Activated T-helper 1 cell treated with anti-CD3 and anti-CD28 coated beads, Interleukin-12 subunit alpha, Interleukin-12 subunit beta, Interleukin-2, Interleukin-4 antibody, amounts not matched to agents 30 ng/mL and 10 ng/mL and 1 ng/mL, durations not matched to agents 14 hours and 24 hours and 36 hours (primary cell): ENCODE measurements at regions of chr12 and their contacts with region 1.

Region 1: DNA sequence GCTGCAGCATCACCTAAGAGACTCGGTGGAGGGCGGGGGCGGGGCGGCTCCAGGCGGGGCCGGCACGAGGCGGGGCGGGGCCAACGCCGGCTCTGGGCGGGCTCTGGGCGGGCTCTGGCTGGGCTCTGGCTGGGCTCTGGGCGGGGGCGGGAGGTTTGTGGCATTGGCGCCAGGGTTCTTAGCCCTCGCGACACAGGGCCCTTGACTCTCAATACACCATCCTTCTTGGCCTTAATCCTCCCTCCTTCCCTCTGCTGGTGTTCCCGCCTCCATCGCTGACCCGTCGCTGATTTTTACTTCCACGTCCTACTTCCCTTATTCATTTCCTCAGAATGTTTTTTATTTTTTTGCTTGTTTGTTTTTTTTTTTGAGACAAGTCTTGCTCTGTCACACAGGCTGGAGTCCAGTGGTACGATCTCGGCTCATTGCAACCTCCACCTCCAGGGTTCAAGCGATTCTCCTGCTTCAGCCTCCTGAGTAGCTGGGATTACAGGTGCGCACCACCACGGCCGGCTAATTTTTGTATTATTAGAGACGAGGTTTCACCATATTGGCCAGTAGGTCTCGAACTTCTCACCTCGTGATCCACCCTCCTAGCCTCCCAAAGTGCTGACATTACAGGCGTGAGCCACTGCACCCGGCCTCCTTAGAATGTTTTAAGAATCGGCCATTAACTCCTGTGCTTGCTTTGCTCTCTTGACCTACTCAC is at the start of gene BLTP3B:
- DNase-seq: peak; percentile 80
- H3K4me3 Mint-ChIP-seq: peak within 1 kb of the TSS; percentile 94
- H3K27ac Mint-ChIP-seq: peak within 1 kb of the TSS; percentile 96
- H3K4me1 Mint-ChIP-seq: peaks cover 44% of the 10 kb centered on the region
- H3K27me3 Mint-ChIP-seq: no peaks in the 10 kb centered on the region
- total RNA-seq, gene BLTP3B: 72.6 and 74.6 TPM in 2 replicates

Region 2: GRCh38 chr12:98503592-98504367 is 1639.2 kb before region 1 on chr12:
- intact Hi-C with region 1: loop called (anchors 5 kb)
- DNase-seq: peak; percentile 90
- H3K4me3 Mint-ChIP-seq: peak overlapping the region; percentile 91
- H3K27ac Mint-ChIP-seq: peak overlapping the region; percentile 99
- H3K4me1 Mint-ChIP-seq: peaks cover 27% of the 10 kb centered on the region
- H3K27me3 Mint-ChIP-seq: peaks cover 8% of the 10 kb centered on the region

Region 3: DNA sequence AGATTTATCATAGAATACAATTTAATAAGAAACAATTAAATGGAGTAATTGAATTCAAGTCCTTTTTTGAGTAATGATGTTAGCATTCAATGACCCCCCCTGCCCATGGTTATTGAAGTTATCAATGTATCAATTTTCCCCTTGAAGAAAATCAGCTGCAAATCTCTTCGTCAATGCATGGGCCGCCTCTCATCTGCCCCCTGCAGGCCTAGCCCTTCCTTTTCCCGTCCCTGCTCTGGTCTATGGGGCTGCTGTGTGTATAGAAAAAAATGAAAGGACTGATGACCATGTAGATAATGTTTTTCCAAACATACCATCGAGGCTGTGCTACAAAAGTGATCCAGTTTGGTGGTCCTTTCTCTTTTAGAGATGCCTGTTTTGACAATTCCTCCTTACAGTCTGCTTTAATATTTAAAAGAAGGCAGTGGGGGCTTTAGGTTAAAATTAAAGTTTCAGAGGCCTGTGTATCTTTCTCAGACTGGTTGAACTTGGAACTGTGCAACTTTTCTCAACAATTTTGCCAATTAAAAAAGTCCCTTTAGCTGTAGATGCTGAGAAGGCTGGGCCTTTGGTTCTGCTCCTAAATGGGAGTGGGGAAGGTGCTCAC is 1399.6 kb before region 1 on chr12:
- intact Hi-C with region 1: loop called (anchors 5 kb)
- DNase-seq: peak; percentile 11
- H3K4me3 Mint-ChIP-seq: peak overlapping the region; percentile 69
- H3K27ac Mint-ChIP-seq: peak overlapping the region; percentile 76
- H3K4me1 Mint-ChIP-seq: peaks cover 60% of the 10 kb centered on the region
- H3K27me3 Mint-ChIP-seq: peaks cover 5% of the 10 kb centered on the region

Region 4: DNA sequence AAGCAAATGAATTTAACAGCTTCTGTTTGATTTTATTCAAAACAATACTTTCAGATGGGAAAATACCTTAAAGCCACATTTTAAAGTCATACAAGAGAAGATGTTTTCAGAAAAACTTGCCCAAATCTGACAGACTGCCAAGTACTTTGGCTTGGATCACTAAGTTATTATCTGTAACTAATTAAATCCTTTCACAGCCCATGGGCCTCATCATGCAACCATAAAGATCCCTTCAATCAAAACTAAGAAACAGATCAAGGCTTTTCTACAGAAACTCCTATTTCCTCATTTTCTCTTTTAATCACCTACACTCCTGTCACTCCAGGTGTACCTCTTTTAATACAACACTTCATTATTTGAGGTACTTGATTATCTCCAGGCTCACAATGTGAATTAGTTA is 28.4 kb before region 1 on chr12:
- intact Hi-C with region 1: loop called (anchors 2 kb)
- DNase-seq: no peak
- H3K4me3 Mint-ChIP-seq: no peak overlapping the region
- H3K27ac Mint-ChIP-seq: no peak overlapping the region
- H3K4me1 Mint-ChIP-seq: peaks cover 18% of the 10 kb centered on the region
- H3K27me3 Mint-ChIP-seq: no peaks in the 10 kb centered on the region

Region 5: DNA sequence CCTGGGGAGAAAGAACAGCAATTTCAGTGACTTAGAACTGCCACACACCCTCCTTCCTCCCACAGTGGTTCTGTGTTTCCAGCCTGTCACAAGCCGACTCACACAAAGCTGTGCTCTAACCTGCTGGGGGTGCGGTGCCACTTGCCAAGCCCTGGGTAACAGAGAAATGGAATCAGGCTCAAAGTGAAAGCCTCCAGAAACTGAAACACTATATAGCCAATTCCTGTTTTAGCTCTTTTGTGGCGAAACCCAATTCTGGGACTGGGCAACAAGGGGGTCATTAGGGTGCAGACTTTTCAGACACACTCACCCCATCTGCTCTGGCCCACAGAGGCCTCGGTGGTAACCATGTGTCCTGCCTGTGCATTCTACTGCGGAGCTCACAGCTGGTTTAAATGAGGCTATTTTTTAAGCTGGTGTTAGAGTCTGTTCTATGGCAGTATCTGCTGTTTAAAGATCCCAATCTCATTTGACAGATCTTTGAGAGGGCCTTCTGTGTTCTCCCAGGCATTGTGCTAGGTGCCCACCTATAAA is 42.4 kb after region 1 on chr12:
- intact Hi-C with region 1: loop called (anchors 5 kb)
- DNase-seq: no peak
- H3K4me3 Mint-ChIP-seq: no peak overlapping the region
- H3K27ac Mint-ChIP-seq: no peak overlapping the region
- H3K4me1 Mint-ChIP-seq: peaks cover 42% of the 10 kb centered on the region
- H3K27me3 Mint-ChIP-seq: no peaks in the 10 kb centered on the region

Region 6: DNA sequence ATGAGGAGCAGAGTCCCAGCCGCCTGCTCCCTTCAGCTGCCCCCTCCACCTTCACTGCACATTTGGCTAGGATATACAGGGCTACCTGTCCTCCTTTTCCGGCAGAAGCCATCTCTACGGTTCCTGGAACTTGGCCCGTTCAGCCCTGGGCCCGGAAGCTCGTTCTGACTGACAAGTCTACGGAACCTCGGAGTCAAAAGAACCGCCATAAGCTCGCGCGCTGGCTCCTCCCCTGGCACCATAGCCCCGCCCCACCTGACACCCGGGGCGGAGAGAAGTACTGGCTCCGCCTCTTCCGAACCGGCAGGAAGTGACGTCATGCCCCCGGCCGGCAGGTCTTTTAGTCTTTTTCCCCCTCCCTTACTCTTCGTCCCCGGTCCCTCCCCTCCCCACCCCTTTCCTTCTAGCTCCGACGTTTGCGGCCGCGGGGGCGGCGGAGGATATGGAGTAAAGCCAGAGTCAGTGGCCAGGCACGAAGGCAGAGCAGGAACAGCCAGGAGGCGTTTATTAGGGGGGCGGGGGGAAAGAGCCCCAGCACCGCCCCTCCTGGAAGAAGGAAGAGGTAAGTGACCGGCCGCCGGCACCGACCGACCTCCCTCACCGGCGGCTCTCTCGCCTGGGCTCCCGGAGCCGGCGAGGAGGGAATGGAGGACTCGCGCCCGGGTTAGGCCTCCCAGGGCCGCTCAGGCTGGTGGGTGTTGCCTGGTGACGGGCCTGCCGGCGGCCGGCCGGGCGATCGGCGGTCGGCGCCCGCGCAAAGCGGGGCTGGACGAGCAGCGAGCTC is 124.0 kb after region 1 on chr12 and contains the starts of genes DEPDC4 and SCYL2:
- intact Hi-C with region 1: loop called (anchors 1 kb)
- DNase-seq: peak; percentile 88
- H3K4me3 Mint-ChIP-seq: peak within 1 kb of the TSS; percentile 99
- H3K27ac Mint-ChIP-seq: peak within 1 kb of the TSS; percentile 99
- H3K4me1 Mint-ChIP-seq: peaks cover 36% of the 10 kb centered on the region
- H3K27me3 Mint-ChIP-seq: no peaks in the 10 kb centered on the region
- total RNA-seq, gene DEPDC4: 1.1 and 2.1 TPM in 2 replicates
- total RNA-seq, gene SCYL2: 33.0 and 38.9 TPM in 2 replicates

Region 7: DNA sequence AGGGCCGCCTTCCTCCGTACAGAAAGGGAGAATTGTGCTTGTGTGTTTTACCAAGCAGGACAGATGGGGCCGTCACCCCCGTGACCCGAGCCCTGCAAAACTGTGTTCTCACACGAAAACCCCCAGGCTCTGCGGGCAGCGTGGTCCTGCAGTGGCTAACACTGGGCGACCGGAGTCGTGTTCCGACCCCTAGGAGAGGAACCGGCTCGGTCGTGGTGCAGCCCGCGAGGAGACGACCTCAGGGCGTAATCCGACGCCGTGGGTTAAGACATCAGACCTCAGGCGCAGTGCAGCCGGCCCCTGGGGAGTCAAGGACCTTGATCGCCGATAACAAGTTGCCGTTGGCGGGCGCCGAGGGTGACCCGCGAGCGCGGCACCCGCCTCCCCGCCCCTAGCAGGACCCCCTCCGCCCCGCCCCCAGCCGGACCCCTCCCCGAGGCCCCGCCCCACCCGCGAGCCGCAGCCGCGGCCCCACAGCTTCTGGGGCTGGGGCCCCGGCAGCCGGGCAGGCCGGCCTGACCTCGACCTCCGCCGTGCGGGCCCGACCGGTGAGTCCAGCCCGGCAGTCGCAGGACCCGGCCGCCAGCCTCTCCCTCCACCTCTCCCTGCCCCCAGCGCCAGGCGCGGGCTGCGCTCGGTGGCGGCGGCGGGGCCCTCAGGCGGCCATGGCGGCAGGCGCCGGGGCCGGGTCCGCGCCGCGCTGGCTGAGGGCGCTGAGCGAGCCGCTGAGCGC is 1554.4 kb after region 1 on chr12 and contains the start of gene CHPT1:
- intact Hi-C with region 1: loop called (anchors 10 kb)
- DNase-seq: peak; percentile 34
- H3K4me3 Mint-ChIP-seq: peak within 1 kb of the TSS; percentile 88
- H3K27ac Mint-ChIP-seq: peak within 1 kb of the TSS; percentile 67
- H3K4me1 Mint-ChIP-seq: peaks cover 23% of the 10 kb centered on the region
- H3K27me3 Mint-ChIP-seq: peaks cover 33% of the 10 kb centered on the region
- total RNA-seq, gene CHPT1: 13.1 and 13.3 TPM in 2 replicates